ENCODE measurements at regions of chr20 and their contacts with region 1.

Region 1: DNA sequence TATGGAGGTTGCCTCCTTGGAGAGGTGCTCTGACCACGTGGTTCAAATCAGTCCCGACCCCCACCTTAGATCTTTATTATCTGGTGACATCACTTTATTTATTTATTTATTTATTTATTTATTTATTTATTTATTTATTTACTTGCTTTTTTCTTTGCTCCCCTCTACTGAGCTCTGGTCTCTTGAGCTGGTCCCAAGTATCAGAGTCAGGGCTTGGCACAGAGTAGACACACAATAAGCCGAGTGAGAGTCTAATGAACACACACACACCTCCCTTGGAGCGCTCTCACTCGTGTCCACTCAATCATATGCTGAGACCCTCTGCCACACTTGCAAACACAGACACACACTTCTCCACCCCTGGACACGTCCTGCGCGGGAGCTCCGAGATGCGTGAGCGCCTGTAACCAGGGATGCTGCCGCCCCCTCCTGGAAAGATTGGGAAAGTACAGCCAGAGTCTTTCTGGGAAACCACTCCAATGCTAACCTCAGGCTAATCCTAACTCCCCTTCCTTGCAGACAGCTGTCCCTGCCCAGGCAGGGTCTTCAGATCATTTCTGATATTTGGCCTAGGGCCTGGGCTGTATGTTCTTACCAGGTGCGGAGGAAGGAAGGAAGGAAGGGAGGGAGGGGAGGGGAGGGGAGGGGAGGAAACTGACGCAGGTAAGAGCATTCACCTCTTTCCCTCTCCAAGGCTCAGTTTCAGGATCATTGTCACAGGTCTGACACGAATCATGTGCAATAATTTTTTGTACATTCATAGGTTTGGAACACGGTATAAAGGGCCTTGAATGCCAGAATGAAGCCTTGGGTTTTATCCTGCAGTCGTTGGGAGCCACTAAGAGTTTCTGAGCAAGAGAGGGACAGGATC is 70.9 kb downstream of the STK35 start:
- DNase-seq: peak; percentile 62
- H3K4me3 Mint-ChIP-seq: no peak overlapping the region
- H3K27ac Mint-ChIP-seq: no peak overlapping the region
- H3K4me1 Mint-ChIP-seq: peaks cover 6% of the 10 kb centered on the region
- H3K27me3 Mint-ChIP-seq: peaks cover 62% of the 10 kb centered on the region
- CTCF ChIP-seq: peak; percentile 95

Region 2: GRCh38 chr20:1776681-1777475 is 395.7 kb before region 1 on chr20:
- CTCF ChIA-PET with region 1: interaction called, 11 read pairs
- POLR2A ChIA-PET with region 1: no interaction called
- intact Hi-C with region 1: no loop called
- DNase-seq: peak; percentile 87
- H3K4me3 Mint-ChIP-seq: peak overlapping the region; percentile 84
- H3K27ac Mint-ChIP-seq: peak overlapping the region; percentile 89
- H3K4me1 Mint-ChIP-seq: peaks cover 18% of the 10 kb centered on the region
- H3K27me3 Mint-ChIP-seq: peaks cover 14% of the 10 kb centered on the region
- CTCF ChIP-seq: peak; percentile 75

Region 3: DNA sequence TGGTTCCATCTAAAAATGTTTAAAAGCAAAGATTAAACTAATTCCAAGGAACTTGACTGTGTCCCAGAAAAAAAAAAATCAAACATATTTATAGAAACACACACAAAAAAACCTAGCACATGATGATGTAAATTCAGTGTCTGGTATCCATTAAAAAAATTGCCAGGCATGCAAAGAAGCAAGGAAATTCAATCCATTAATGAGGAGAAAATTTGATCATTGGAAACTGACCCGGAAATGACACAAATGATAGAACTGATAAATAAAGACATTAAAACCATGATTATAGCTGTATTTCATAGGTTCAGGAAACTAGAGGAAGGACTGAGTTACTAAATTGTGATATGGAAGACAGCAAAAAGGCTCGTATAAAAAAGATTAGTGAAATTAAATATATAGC is 213.4 kb before region 1 on chr20:
- CTCF ChIA-PET with region 1: interaction called, 95 read pairs
- POLR2A ChIA-PET with region 1: no interaction called
- intact Hi-C with region 1: no loop called
- DNase-seq: no peak
- H3K4me3 Mint-ChIP-seq: no peak overlapping the region
- H3K27ac Mint-ChIP-seq: no peak overlapping the region
- H3K4me1 Mint-ChIP-seq: no peaks in the 10 kb centered on the region
- H3K27me3 Mint-ChIP-seq: peaks cover 25% of the 10 kb centered on the region
- CTCF ChIP-seq: no peak

Region 4: GRCh38 chr20:2005831-2006426 is 166.6 kb before region 1 on chr20:
- CTCF ChIA-PET with region 1: interaction called, 37 read pairs
- POLR2A ChIA-PET with region 1: interaction called, 3 read pairs
- intact Hi-C with region 1: loop called (anchors 1 kb)
- DNase-seq: peak; percentile 63
- H3K4me3 Mint-ChIP-seq: no peak overlapping the region
- H3K27ac Mint-ChIP-seq: no peak overlapping the region
- H3K4me1 Mint-ChIP-seq: no peaks in the 10 kb centered on the region
- H3K27me3 Mint-ChIP-seq: peaks cover 46% of the 10 kb centered on the region
- CTCF ChIP-seq: no peak

Region 5: GRCh38 chr20:2038161-2038560 is 134.4 kb before region 1 on chr20:
- CTCF ChIA-PET with region 1: no interaction called
- POLR2A ChIA-PET with region 1: no interaction called
- intact Hi-C with region 1: no loop called
- DNase-seq: no peak
- H3K4me3 Mint-ChIP-seq: no peak overlapping the region
- H3K27ac Mint-ChIP-seq: no peak overlapping the region
- H3K4me1 Mint-ChIP-seq: no peaks in the 10 kb centered on the region
- H3K27me3 Mint-ChIP-seq: peaks cover 49% of the 10 kb centered on the region
- CTCF ChIP-seq: no peak

Region 6: GRCh38 chr20:2156666-2157624 is 15.6 kb before region 1 on chr20:
- CTCF ChIA-PET with region 1: interaction called, 27 read pairs
- POLR2A ChIA-PET with region 1: interaction called, 5 read pairs
- intact Hi-C with region 1: no loop called
- DNase-seq: peak; percentile 41
- H3K4me3 Mint-ChIP-seq: no peak overlapping the region
- H3K27ac Mint-ChIP-seq: no peak overlapping the region
- H3K4me1 Mint-ChIP-seq: peaks cover 21% of the 10 kb centered on the region
- H3K27me3 Mint-ChIP-seq: no peaks in the 10 kb centered on the region
- CTCF ChIP-seq: no peak